ENCODE measurements at regions of chr15 and their contacts with region 1.

Region 1: DNA sequence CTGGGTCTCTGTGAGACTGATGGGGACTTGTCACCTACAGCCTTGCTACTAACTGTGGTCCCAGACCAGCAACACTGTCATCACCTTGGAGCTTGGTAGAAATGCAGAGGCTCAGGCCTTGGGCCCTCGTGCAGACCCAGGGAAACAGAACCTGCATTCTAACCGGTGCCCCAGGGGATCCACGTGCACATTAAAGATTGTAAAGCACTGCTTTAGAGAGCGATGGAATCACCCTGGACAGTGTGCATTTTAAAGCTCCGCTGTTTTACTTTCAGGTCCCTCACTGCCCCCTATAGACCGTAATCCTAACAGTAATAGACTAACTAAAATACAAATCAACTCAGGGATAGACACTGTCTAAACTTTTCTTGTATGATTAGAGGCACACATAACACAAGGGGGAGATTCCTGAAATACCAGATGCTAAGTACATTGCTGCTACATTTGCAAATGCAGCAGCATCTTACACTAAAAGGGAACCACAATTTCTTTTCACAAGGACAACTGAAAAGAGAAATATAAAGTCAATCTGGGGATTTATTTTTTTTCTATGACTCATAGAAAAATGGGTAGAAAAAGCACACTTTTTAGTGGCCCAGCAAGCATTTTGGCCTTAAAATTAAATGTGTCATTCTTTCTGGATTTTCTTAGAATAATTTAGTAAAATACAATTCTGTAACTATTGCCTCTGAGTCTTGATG is 10.5 kb upstream of the SH3GL3 start:
- DNase-seq: peak; percentile 63

Region 2: GRCh38 chr15:83248151-83249029 is 188.2 kb before region 1 on chr15:
- CTCF ChIA-PET with region 1: interaction called, 89 read pairs
- POLR2A ChIA-PET with region 1: interaction called, 4 read pairs
- DNase-seq: peak; percentile 60

Region 3: DNA sequence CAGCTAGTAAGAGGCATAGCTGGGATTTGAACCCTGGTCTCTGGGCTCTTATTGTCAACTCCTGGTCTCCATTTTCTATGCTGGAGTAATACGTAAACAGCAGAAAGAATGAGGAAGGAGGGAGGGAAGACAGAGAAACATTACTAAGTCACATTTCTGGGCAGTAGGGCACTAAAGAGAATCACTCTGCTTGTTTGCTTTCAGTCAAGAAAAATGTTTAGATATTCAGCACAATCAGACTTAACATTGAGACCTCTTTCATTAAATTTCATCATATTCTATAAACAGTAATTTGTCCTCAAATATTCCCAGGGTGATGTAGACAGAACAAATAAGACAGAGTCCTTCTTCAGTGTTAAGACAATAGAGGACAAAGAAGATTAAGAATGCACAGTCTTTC is 84.5 kb before region 1 on chr15:
- CTCF ChIA-PET with region 1: no interaction called
- POLR2A ChIA-PET with region 1: no interaction called
- DNase-seq: no peak

Region 4: DNA sequence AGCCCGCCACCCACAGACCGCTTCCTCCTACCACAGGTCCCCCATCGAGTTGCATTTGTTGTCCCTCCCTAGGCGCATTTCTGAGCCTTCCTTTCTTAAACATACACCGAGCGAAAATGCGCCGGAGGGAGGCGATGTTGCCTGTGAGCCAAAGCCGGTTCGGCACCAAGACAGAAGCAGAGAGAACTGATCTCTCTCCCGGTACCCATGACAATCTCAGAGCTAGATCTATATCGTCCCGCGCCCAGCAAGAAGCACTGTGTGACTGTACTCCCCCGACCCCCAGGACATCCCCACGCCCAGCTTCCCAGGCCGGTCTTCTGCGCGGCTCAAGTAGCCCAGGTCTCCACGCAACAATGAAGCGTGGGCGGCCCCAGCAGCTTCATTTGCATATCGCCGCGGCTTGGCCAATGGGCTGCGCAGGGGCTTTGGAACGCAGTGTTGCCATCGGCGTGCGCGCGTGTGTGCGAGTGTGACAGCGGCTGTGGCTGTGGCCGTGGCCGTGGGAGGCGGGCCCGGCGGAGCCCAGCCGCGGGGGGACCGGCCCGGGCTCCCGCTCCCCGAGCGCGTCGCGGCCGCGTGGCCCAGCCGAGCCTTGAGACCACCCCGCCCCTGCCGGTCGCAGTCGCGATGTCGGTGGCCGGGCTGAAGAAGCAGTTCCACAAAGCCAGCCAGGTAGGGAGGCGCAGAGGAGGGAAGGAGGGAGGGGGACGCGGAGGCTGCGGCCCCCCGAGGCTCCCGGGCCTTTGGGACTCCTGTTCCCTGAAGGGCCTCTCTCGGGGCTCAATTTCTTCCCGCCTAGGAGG is 10.5 kb after region 1 on chr15 and contains the start of gene SH3GL3:
- CTCF ChIA-PET with region 1: interaction called, 12 read pairs
- POLR2A ChIA-PET with region 1: interaction called, 8 read pairs
- DNase-seq: peak; percentile 83

Region 5: GRCh38 chr15:83487519-83487918 is 50.9 kb after region 1 on chr15:
- CTCF ChIA-PET with region 1: no interaction called
- POLR2A ChIA-PET with region 1: no interaction called
- DNase-seq: no peak

Measured in HEK293T (cell line).